ENCODE measurements at regions of chr9 and their contacts with region 1.

Region 1: DNA sequence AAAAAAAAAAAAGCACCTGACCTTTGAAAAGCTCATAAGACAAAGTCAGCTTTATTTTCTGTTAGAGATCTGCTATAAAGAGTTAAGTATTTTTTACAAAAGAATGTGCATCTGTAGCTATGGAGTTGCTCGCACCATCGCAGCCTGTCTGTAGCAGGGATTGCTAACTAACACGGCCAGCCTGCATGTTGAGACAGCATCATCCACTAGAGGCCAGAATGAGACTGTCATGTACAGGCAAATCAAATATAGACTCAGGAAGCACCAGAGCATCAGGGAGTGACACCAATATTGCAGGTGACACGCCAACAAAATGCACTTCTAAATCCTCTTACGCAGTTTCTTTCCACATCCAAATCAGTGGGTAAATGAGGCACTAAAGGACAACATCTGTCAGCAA is 136.3 kb upstream of the RASEF start:
- DNase-seq: no peak

Region 2: GRCh38 chr9:83544002-83544698 is 344.9 kb after region 1 on chr9:
- intact Hi-C with region 1: loop called (anchors 1 kb)
- DNase-seq: no peak

Region 3: GRCh38 chr9:83601463-83601862 is 402.2 kb after region 1 on chr9:
- intact Hi-C with region 1: loop called (anchors 5 kb)
- DNase-seq: no peak

Measured in cardiac septum (tissue), 1 donor.